K562 (cell line): ENCODE measurements at regions of chr4 and their contacts with region 1.

Region 1: GRCh38 chr4:143498021-143498420 is 15.5 kb upstream of the SMARCA5 start:
- DNase-seq: no peak
- ATAC-seq: no peak
- H3K4me3 ChIP-seq: no peak overlapping the region
- H3K27ac ChIP-seq: no peak overlapping the region
- H3K4me1 ChIP-seq: no peaks in the 10 kb centered on the region
- H3K27me3 ChIP-seq: no peaks in the 10 kb centered on the region; a peak in 1 of 5 replicates
- CTCF ChIP-seq: no peak
- EP300 ChIP-seq: no peak
- POLR2A ChIP-seq: no peak
- RAD21 ChIP-seq: no peak

Region 2: GRCh38 chr4:142707401-142707800 is 790.6 kb before region 1 on chr4:
- CTCF ChIA-PET with region 1: no interaction called
- POLR2A ChIA-PET with region 1: no interaction called
- in situ Hi-C with region 1: no loop called
- intact Hi-C with region 1: no loop called
- DNase-seq: no peak
- ATAC-seq: no peak
- H3K4me3 ChIP-seq: no peak overlapping the region
- H3K27ac ChIP-seq: no peak overlapping the region
- H3K4me1 ChIP-seq: no peaks in the 10 kb centered on the region
- H3K27me3 ChIP-seq: no peaks in the 10 kb centered on the region
- CTCF ChIP-seq: no peak
- EP300 ChIP-seq: no peak
- POLR2A ChIP-seq: no peak
- RAD21 ChIP-seq: no peak

Region 3: DNA sequence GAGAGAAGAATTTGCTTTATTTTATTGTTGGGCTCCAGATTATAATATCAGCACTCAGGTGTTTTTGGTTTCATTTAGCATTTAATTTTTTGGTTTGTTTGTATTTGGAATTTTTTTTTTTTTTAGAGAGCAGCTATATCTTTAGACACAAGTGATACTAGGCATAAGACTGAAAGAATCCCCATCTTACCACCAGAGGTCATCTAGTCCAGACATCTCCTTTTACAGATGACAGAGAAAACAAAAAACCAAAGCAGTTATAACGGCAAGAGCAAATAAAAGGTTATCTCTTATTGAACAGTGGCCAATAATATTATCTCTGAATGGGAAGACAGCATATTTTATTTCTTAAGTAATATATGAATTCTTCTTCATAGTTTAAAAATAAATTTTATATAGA is 290.5 kb before region 1 on chr4:
- CTCF ChIA-PET with region 1: no interaction called
- POLR2A ChIA-PET with region 1: no interaction called
- in situ Hi-C with region 1: loop called (anchors 10 kb)
- intact Hi-C with region 1: no loop called
- DNase-seq: peak in 1 of 4 experiments; percentile 15
- ATAC-seq: peak; percentile 61; the same call in 2 of the 3 replicates
- H3K4me3 ChIP-seq: no peak overlapping the region
- H3K27ac ChIP-seq: no peak overlapping the region
- H3K4me1 ChIP-seq: no peaks in the 10 kb centered on the region
- H3K27me3 ChIP-seq: no peaks in the 10 kb centered on the region
- CTCF ChIP-seq: peak in 1 of 3 experiments; percentile 38; a peak in 2 of 6 replicates
- EP300 ChIP-seq: no peak
- POLR2A ChIP-seq: no peak
- RAD21 ChIP-seq: no peak

Region 4: GRCh38 chr4:143329985-143330384 is 168.0 kb before region 1 on chr4:
- CTCF ChIA-PET with region 1: no interaction called
- POLR2A ChIA-PET with region 1: no interaction called
- in situ Hi-C with region 1: no loop called
- intact Hi-C with region 1: no loop called
- DNase-seq: no peak
- ATAC-seq: 0 out of 3 replicates have a peak, but pooled peaks have one; percentile 52
- H3K4me3 ChIP-seq: no peak overlapping the region
- H3K27ac ChIP-seq: no peak overlapping the region
- H3K4me1 ChIP-seq: no peaks in the 10 kb centered on the region
- H3K27me3 ChIP-seq: no peaks in the 10 kb centered on the region
- CTCF ChIP-seq: peak; percentile 18 to 47 (median 35); a peak in 3 of 6 replicates
- EP300 ChIP-seq: no peak
- POLR2A ChIP-seq: no peak
- RAD21 ChIP-seq: peak in 1 of 2 experiments; percentile 48; a peak in 3 of 4 replicates